ENCODE measurements at regions of chr2 and their contacts with region 1.

Region 1: GRCh38 chr2:96739633-96740428 is at the start of gene LMAN2L:
- DNase-seq: peak; percentile 100
- H3K4me3 ChIP-seq: peak within 1 kb of the TSS; percentile 73 to 93 (median 84)
- H3K27ac ChIP-seq: peak within 1 kb of the TSS; percentile 75 to 86 (median 81)
- H3K4me1 ChIP-seq: peaks cover 30 to 55% (median 44%) of the 10 kb centered on the region in 4 donors
- H3K27me3 ChIP-seq: no peaks in the 10 kb centered on the region
- CTCF ChIP-seq: no peak
- EP300 ChIP-seq: no peak
- POLR2A ChIP-seq: no peak
- total RNA-seq, gene LMAN2L: 13.7 to 22.1 (median 21.2) TPM

Region 2: GRCh38 chr2:96625571-96626552 is 114.0 kb before region 1 on chr2:
- intact Hi-C with region 1: no loop called
- DNase-seq: no peak
- H3K4me3 ChIP-seq: no peak overlapping the region
- H3K27ac ChIP-seq: peak overlapping the region; percentile 44 to 70 (median 56)
- H3K4me1 ChIP-seq: peaks cover 12 to 53% (median 46%) of the 10 kb centered on the region in 4 donors
- H3K27me3 ChIP-seq: no peaks in the 10 kb centered on the region
- CTCF ChIP-seq: no peak
- EP300 ChIP-seq: no peak
- POLR2A ChIP-seq: no peak

Region 3: DNA sequence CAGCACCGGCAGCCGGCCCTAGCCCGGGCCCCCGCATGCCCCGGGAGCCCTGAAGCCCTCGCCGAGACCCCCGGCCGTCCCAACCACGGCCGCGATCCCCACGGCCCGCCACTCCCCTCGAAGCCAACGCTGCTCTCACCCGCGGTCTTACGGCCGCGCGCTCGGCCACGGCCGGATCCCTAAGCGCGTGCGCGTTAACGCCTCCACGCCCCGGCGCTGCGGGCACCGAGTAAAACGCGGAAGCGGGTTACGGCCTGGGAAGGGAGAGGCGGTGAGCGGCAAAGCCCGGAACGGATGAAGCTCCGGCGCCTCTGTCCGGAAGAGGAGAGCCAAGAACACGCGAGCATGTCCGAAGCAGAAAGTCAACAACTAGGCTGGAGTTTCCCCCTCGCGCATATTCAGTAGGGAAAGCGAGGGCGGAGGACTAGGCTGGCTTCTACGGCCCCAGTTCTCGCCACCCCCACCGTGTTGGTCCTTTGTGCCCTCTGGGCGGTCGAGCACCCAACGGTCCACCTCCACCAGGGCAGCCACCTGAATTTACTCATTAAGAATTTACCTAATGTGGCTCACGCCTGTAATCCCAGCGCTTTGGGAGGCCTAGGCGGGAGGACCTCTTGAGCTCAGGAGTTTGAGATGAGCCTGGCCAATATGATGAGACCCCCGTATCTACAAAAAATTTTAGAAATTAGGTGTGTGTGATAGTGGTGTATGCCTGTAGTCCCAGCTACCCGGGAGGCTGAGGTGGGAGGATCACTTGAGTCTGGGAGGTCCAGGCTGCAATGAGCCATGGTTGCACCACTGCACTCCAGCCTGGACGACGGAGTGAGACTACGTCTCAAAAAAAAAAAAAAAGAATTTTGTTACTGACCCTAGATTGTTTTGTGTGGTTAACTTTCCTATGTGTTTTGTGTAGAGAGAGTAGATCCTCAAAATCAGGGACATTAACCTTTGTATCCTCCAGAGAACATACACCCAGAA is 101.4 kb before region 1 on chr2 and contains the start of gene KANSL3:
- intact Hi-C with region 1: loop called (anchors 5 kb)
- DNase-seq: peak; percentile 96
- H3K4me3 ChIP-seq: peak within 1 kb of the TSS; percentile 64 to 83 (median 71)
- H3K27ac ChIP-seq: peak within 1 kb of the TSS; percentile 91 to 97 (median 94)
- H3K4me1 ChIP-seq: peaks cover 27 to 46% (median 43%) of the 10 kb centered on the region in 4 donors
- H3K27me3 ChIP-seq: no peaks in the 10 kb centered on the region
- CTCF ChIP-seq: peak in 1 of 3 experiments; percentile 40
- EP300 ChIP-seq: no peak
- POLR2A ChIP-seq: peak; percentile 98
- total RNA-seq, gene KANSL3: 54.2 to 63.1 (median 59.5) TPM